ENCODE measurements at regions of chr14 and their contacts with region 1.

Region 1: DNA sequence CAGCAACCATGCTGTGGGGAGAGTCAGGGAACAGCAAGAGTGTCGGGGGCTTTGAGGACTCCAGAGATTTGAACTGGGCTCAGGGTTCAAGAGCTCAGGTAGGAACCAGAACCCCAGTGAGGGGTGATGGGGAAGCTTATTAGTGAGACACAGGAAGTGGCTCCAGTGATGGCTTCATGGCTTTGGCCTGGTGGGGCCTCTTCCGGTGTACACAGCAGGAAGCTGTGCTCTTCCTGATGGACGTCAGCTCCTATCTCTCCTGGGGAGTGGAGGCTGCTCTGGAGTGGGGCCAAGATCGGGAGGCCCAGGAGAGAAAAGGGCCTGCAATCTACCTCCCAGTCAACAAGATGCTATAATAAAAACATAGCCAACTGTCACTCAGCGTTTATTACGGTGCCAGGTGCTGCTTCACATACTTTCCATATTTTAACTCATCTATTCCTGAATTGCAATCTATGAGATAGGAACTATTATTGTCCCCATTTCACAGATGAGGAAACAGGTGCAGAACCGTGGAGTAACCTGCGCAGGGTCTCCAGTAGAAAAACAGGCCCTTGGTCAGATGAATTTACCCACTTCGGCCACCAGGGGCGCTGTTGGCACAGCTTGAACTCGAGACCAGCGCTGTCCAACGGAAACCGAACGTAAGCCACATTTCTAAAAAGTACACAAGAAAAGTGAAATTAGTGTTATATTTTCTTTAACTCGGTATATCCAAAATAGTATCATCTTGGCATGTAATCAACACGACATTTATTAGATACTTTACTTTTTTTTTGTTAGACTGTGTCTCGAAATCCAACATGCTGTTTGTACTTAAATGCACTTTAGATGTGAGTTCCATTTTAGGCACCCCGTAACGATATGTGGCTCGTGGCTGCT is 63.6 kb upstream of the DLK1 start:
- DNase-seq: no peak
- H3K4me3 ChIP-seq: no peak overlapping the region
- H3K27ac ChIP-seq: no peak overlapping the region
- H3K4me1 ChIP-seq: peaks cover 0 to 20% (median 4%) of the 10 kb centered on the region in 3 donors
- H3K27me3 ChIP-seq: peaks cover 0 to 49% (median 0%) of the 10 kb centered on the region in 4 donors
- CTCF ChIP-seq: peak; percentile 75 to 91 (median 84)
- POLR2A ChIP-seq: no peak

Region 2: DNA sequence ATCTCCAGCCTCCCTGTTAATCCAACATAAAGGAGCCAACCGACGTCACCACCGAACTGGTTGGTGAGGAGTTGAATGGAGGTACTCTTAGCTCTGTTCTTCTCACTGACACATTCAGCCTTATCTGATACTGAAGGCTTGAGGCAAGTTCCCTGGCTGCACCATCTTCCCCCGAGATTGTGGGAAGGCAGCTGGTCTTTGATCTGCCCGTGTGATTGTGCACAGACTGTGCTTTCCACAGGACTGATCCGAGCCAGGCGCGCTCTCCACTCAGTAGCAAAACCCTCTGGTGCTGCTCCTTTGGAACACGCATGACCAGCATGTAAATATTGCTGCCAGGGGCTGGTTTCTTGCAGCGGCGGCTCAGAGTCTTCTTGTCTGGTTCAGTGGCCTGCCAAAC is 33.5 kb after region 1 on chr14:
- intact Hi-C with region 1: no loop called
- DNase-seq: no peak
- H3K4me3 ChIP-seq: no peak overlapping the region
- H3K27ac ChIP-seq: no peak overlapping the region
- H3K4me1 ChIP-seq: peaks cover 4 to 22% (median 14%) of the 10 kb centered on the region in 3 donors
- H3K27me3 ChIP-seq: peaks cover 0 to 14% (median 0%) of the 10 kb centered on the region in 4 donors
- CTCF ChIP-seq: no peak
- POLR2A ChIP-seq: no peak

Region 3: DNA sequence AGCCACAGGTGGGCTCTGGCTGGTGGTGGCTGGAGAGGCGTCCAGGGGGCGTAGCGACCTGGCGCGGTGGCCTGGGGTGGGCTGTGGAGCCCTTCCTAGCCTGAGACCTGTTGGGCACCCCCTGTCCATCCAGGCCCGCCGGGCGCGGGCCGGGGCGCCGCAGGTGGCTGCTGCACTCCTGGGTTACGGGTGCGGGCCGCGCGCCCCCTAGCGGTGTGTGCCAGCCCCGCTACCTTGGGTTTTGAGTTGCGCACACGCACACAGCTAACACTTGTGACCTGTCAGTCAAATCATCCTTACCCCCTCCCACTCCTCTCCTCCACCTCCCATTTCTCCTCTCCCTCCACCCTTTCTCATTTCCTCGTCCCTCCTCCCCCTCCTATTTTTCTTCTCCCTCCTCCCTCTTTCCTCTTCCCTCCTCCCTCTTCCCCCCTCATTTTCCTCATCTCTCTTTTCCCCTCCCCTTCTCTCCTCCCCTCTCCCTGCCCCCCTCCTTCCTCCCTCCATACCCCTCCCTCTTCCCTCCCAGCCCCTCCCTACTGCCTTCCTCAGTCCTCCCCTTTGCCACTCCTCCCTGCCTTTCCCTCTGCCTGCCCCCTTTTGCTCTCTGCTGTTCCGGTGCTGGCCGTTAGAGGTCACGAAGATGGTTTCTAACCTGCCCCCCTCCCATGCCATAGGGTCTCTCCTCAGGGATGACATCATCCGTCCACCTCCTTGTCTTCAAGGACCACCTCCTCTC is 165.1 kb after region 1 on chr14:
- intact Hi-C with region 1: loop called (anchors 10 kb)
- DNase-seq: no peak
- H3K4me3 ChIP-seq: peak overlapping the region in 2 of 4 donors; percentile 41 to 53
- H3K27ac ChIP-seq: no peak overlapping the region
- H3K4me1 ChIP-seq: peaks cover 0 to 15% (median 0%) of the 10 kb centered on the region in 3 donors
- H3K27me3 ChIP-seq: peaks cover 0 to 74% (median 2%) of the 10 kb centered on the region in 4 donors
- CTCF ChIP-seq: peak in 4 of 6 experiments; percentile 7 to 64 (median 26)
- POLR2A ChIP-seq: no peak

Region 4: GRCh38 chr14:100850841-100851585 is 187.9 kb after region 1 on chr14:
- intact Hi-C with region 1: loop called (anchors 10 kb)
- DNase-seq: no peak
- H3K4me3 ChIP-seq: no peak overlapping the region
- H3K27ac ChIP-seq: no peak overlapping the region
- H3K4me1 ChIP-seq: peaks cover 0 to 18% (median 0%) of the 10 kb centered on the region in 3 donors
- H3K27me3 ChIP-seq: no peaks in the 10 kb centered on the region
- CTCF ChIP-seq: peak; percentile 51 to 87 (median 81)
- POLR2A ChIP-seq: no peak

Measured in esophagus squamous epithelium (tissue), 5 donors.